ENCODE measurements at regions of chr2 and their contacts with region 1.

Region 1: DNA sequence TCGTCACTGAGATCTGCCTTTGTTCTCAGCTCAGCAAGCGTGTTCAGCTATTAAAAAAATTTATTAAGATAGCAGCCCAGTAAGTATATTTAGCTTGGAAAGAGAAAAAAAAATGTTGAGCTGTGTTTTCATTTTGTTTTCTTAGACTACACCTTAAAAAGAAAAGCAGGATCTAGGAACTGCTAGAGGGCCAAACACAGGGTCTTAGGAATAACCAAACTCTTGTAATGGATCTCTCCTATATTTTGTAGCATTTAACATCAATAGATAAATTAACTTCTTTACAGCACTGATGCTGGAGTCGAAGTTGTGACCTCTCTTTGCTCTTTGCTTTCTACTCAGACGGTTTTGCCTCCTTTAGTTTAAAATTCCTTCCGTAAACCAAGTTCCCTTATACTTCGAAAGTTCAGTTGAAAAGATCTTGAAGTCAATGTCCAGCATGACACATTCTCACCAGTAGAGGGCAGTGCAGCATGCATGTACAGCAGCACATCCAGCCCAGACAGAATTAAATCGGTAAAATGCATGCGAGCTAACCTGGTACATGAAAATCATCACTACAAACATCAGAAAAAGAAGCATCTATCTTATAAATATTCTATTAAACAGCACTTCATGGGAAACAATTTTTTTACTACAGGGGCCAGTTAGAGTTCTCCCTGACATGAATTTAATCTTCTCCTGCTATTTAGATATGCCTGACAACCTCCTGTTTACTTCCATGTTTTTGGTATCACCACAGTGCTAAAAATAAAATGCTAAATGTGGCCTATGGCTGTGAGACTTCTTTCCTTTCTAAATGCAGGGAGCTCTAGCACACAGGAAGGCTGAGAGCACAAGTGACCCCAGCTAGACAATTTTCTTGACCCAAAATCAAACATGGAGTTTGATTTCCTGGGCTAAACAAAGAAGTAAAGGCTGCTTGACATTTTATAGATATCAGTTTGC is 48.2 kb upstream of the MAP3K20 start:
- DNase-seq: peak; percentile 86
- ATAC-seq: peak; percentile 84
- H3K4me3 Mint-ChIP-seq: no peak overlapping the region
- H3K27ac Mint-ChIP-seq: no peak overlapping the region
- H3K4me1 Mint-ChIP-seq: no peaks in the 10 kb centered on the region
- H3K27me3 Mint-ChIP-seq: no peaks in the 10 kb centered on the region

Region 2: DNA sequence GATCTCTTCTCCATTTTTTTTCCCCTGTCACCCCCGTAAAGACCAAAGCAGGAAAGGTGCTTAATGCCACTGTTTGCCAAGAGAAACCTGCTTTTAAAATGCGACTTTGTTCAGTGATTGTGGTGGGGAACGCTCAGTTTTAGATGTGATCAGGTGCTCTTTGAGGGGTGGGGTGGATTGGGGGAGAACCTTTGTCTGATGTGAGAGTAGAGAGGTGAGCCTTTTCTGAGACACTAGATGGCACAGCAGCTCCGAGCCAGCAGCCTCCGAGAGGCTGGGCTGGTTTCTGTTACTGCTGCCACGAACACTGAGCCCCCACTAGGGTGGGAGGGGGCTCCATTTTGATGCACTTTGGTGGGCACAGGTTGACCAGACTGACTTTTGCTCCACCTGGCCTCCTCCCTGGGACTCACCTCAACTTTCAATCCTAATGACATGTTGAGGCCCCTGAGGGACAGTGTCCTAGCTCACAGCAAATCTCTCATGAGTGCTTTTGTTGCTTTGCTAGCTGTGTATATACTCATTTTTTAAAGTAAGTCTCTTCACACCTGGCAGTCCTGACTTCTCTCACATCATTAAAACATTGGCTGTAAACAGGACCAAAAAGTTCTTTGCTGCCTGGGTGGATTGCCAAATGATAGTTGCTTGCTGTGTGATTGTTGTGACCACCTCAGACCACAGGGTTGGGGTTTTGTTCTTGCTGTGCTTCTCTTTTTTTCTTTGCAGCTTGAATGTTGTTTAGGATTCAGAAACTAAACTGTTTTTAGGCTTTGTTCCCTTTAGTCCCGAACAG is 50.0 kb before region 1 on chr2:
- CTCF ChIA-PET with region 1: interaction called, 10 read pairs
- POLR2A ChIA-PET with region 1: no interaction called
- DNase-seq: no peak
- ATAC-seq: no peak
- H3K4me3 Mint-ChIP-seq: no peak overlapping the region
- H3K27ac Mint-ChIP-seq: no peak overlapping the region
- H3K4me1 Mint-ChIP-seq: peaks cover 10% of the 10 kb centered on the region
- H3K27me3 Mint-ChIP-seq: peaks cover 19% of the 10 kb centered on the region

Region 3: GRCh38 chr2:173075056-173075780 is 47.8 kb after region 1 on chr2:
- CTCF ChIA-PET with region 1: interaction called, 13 read pairs
- POLR2A ChIA-PET with region 1: no interaction called
- DNase-seq: no peak
- ATAC-seq: no peak
- H3K4me3 Mint-ChIP-seq: peak overlapping the region; percentile 76
- H3K27ac Mint-ChIP-seq: peak overlapping the region; percentile 78
- H3K4me1 Mint-ChIP-seq: peaks cover 25% of the 10 kb centered on the region
- H3K27me3 Mint-ChIP-seq: peaks cover 20% of the 10 kb centered on the region

Region 4: DNA sequence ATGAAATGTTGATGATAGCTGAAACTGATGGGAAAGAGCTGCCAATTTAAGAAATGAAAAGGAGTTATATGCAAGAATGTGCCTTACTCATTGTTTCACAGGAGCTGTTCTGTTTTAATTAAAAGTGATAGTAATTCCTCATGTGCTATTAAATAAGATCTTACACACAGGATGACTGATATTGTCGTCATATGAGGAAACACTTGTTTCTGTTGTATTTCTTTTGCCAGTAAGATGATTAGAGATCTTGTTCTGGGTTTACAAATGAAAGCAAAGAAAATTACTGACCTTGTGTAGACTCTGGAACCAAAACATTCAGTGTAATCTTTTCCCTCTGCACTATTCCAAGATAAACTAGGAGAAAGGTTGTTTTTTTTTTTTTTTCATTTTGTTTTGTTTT is 171.8 kb after region 1 on chr2:
- CTCF ChIA-PET with region 1: interaction called, 21 read pairs
- POLR2A ChIA-PET with region 1: no interaction called
- DNase-seq: no peak
- ATAC-seq: no peak
- H3K4me3 Mint-ChIP-seq: no peak overlapping the region
- H3K27ac Mint-ChIP-seq: no peak overlapping the region
- H3K4me1 Mint-ChIP-seq: no peaks in the 10 kb centered on the region
- H3K27me3 Mint-ChIP-seq: no peaks in the 10 kb centered on the region

Region 5: GRCh38 chr2:173204316-173204715 is 176.9 kb after region 1 on chr2:
- CTCF ChIA-PET with region 1: interaction called, 340 read pairs
- POLR2A ChIA-PET with region 1: no interaction called
- DNase-seq: no peak
- ATAC-seq: no peak
- H3K4me3 Mint-ChIP-seq: no peak overlapping the region
- H3K27ac Mint-ChIP-seq: no peak overlapping the region
- H3K4me1 Mint-ChIP-seq: no peaks in the 10 kb centered on the region
- H3K27me3 Mint-ChIP-seq: no peaks in the 10 kb centered on the region

Region 6: GRCh38 chr2:173210270-173211196 is 183.1 kb after region 1 on chr2:
- CTCF ChIA-PET with region 1: interaction called, 340 read pairs
- POLR2A ChIA-PET with region 1: no interaction called
- DNase-seq: peak; percentile 68
- ATAC-seq: peak; percentile 77
- H3K4me3 Mint-ChIP-seq: no peak overlapping the region
- H3K27ac Mint-ChIP-seq: no peak overlapping the region
- H3K4me1 Mint-ChIP-seq: no peaks in the 10 kb centered on the region
- H3K27me3 Mint-ChIP-seq: no peaks in the 10 kb centered on the region

Region 7: GRCh38 chr2:173448938-173449471 is 421.6 kb after region 1 on chr2:
- CTCF ChIA-PET with region 1: interaction called, 11 read pairs
- POLR2A ChIA-PET with region 1: no interaction called
- DNase-seq: peak; percentile 75
- ATAC-seq: peak; percentile 72
- H3K4me3 Mint-ChIP-seq: no peak overlapping the region
- H3K27ac Mint-ChIP-seq: peak overlapping the region; percentile 57
- H3K4me1 Mint-ChIP-seq: peaks cover 14% of the 10 kb centered on the region
- H3K27me3 Mint-ChIP-seq: peaks cover 14% of the 10 kb centered on the region